ENCODE measurements at regions of chr6 and their contacts with region 1.

Region 1: DNA sequence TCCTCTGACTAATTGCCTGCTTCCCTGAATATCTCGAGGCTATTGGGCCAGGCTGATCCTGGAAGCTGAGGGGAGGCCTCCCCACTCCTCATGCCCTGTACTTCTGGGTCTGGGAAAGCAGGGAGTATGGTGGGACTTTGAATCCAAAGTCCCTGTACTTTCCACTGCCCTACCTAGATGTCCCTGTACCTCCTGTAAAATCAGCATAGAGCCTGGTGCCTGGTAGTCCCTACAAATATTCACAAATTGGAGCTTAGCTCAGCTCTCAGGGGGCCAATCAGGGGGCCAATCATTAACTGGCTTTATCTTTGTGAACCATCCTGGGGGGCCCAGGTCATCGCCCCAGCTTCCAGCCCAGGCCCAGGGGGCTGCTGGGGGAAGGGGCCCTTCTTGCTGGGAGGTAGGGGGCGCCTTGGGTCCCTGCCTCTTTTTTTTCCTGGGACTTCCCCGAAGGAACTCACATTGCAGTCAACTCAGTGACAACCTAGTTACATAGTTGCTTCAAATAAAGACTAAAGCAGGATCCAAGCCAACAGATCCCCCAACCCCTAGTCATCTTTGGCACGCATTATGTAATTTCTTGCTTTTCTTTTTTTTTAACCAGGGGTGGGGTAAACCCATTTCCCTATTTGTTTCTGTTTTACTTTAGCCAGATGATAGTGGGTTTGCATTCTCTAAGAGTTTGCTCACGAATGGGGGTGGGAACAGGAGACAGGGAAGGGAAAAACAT is 6.9 kb upstream of the VEGFA start:
- DNase-seq: no peak
- ATAC-seq: peak in 3 of 4 donors; percentile 4 to 50 (median 22)
- H3K4me3 ChIP-seq: no peak overlapping the region
- H3K27ac ChIP-seq: peak overlapping the region in 2 of 4 donors; percentile 34 to 66
- H3K4me1 ChIP-seq: peaks cover 0 to 3% (median 0%) of the 10 kb centered on the region in 3 donors
- H3K27me3 ChIP-seq: no peaks in the 10 kb centered on the region
- CTCF ChIP-seq: no peak

Region 2: DNA sequence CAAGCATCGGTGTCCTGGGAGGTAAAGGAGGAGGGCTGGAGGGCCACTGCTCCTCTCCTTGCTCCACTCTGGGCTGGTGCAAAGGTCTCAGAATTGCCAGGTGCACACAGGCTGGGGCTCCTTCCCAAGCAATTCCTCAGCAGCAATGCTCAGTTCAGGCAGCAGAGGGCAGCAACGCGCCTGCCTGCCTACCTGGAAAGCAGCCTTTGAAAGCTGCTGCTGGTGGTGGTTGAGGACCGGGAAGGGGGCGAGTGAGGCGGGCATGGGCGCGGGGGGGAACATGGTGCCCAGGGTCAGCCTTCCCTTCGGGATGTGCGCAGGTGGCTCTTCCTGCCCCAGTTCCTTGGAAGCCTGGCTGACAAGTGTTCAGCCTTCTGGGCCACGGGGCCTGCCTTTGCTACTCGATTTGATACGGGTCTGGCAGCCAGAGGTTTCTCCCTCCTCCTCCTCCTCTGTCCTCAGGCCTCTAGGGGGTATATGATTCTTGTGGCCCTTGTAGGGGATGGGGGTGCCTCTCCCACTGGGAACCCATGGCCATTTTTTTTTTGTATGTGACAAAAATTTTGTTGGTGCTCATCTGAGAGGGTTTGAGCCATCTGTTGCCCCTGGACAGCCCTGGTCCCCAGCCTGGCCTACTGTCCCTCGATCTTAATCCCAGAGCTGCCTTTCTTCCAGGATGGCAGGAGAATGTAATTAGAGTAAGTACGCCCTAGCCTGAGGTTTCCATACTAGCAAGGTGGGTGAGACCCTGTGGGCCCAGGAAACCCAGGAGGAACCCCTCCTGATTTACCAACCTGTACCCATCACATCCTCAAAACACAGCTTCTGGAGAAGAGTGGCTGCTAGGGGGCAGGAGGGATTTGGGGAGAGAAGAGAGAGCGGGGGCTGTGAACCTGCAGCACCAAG is 95.6 kb before region 1 on chr6:
- intact Hi-C with region 1: loop called in 1 of 3 experiments (anchors 5 kb)
- DNase-seq: peak; percentile 79 to 96 (median 90)
- ATAC-seq: peak; percentile 81 to 92 (median 88)
- H3K4me3 ChIP-seq: peak overlapping the region in 1 of 4 donors; percentile 23
- H3K27ac ChIP-seq: peak overlapping the region in 1 of 4 donors; percentile 63
- H3K4me1 ChIP-seq: peaks cover 14 to 21% (median 21%) of the 10 kb centered on the region in 3 donors
- H3K27me3 ChIP-seq: no peaks in the 10 kb centered on the region
- CTCF ChIP-seq: peak; percentile 92 to 96 (median 92)

Region 3: GRCh38 chr6:43838276-43839036 is 75.3 kb after region 1 on chr6:
- intact Hi-C with region 1: loop called in 1 of 3 experiments (anchors 5 kb)
- DNase-seq: peak in 5 of 6 donors; percentile 43 to 68 (median 57)
- ATAC-seq: peak; percentile 64 to 79 (median 71)
- H3K4me3 ChIP-seq: no peak overlapping the region
- H3K27ac ChIP-seq: peak overlapping the region in 3 of 4 donors; percentile 32 to 50 (median 39)
- H3K4me1 ChIP-seq: peaks cover 13 to 32% (median 30%) of the 10 kb centered on the region in 3 donors
- H3K27me3 ChIP-seq: no peaks in the 10 kb centered on the region
- CTCF ChIP-seq: peak; percentile 27 to 66 (median 54)